HEK293 (cell line): ENCODE measurements at regions of chr2 and their contacts with region 1.

Region 1: GRCh38 chr2:164841719-164842623 is at the start of gene COBLL1:
- H3K4me3 ChIP-seq: peak within 1 kb of the TSS; percentile 87
- H3K27ac ChIP-seq: peak within 1 kb of the TSS; percentile 95
- H3K4me1 ChIP-seq: peaks cover 21% of the 10 kb centered on the region
- CTCF ChIP-seq: peak; percentile 89

Region 2: GRCh38 chr2:164917296-164917903 is 75.4 kb after region 1 on chr2:
- CTCF ChIA-PET with region 1: interaction called, 21 read pairs
- POLR2A ChIA-PET with region 1: no interaction called
- H3K4me3 ChIP-seq: no peak overlapping the region
- H3K27ac ChIP-seq: no peak overlapping the region
- H3K4me1 ChIP-seq: peaks cover 3% of the 10 kb centered on the region; the same call in 1 of the 2 replicates
- CTCF ChIP-seq: peak; percentile 60

Region 3: GRCh38 chr2:164928101-164928673 is 86.2 kb after region 1 on chr2:
- CTCF ChIA-PET with region 1: no interaction called
- POLR2A ChIA-PET with region 1: no interaction called
- H3K4me3 ChIP-seq: no peak overlapping the region
- H3K27ac ChIP-seq: no peak overlapping the region
- H3K4me1 ChIP-seq: no peaks in the 10 kb centered on the region
- CTCF ChIP-seq: no peak